Stomach (tissue), 19 donors: ENCODE measurements at regions of chr18 and their contacts with region 1.

Region 1: DNA sequence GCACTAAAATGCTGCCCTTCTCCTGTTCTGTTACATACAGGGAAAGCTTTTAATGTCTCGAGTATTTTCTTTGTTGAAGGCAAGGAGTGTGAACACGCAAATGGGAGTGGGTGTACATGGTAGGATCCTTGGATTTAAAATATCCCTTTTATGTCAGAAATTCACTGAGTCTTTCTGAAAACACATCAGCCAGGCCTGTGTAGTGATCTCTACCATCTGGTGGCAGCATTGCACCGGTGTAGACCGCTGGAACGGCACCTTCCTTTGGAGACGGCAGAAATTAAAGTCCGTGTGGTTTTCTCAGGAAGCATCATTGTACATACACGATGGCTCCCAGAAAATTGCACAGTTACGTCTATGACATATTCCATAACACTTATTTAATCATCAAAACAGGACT is 515.8 kb downstream of the GALR1 start:
- DNase-seq: peak in 1 of 2 donors; percentile 71
- H3K4me3 ChIP-seq: no peak overlapping the region
- H3K27ac ChIP-seq: no peak overlapping the region
- H3K4me1 ChIP-seq: no peaks in the 10 kb centered on the region
- H3K27me3 ChIP-seq: peaks cover 0 to 22% (median 0%) of the 10 kb centered on the region in 3 donors
- CTCF ChIP-seq: no peak
- EP300 ChIP-seq: no peak
- POLR2A ChIP-seq: no peak

Region 2: DNA sequence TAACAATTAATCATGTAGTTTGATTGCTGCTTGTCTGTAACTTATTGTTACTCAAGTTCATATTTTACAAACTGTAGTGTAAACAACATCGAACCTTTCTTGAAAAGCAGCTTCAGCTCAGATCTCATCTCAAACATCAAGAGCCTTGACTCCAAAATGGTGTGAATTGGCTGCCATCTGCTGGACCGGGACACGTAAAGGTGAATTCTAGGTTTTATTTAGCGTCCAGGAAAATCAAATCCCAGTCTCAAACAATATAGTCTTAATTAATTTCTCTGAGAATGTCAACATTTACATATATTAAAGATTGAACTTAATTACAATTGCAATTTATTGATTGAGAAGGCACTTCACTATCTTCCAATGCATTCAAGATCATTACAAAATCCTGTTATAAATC is 62.8 kb before region 1 on chr18:
- intact Hi-C with region 1: loop called (anchors 2 kb)
- DNase-seq: peak in 1 of 2 donors; percentile 69
- H3K4me3 ChIP-seq: no peak overlapping the region
- H3K27ac ChIP-seq: no peak overlapping the region
- H3K4me1 ChIP-seq: no peaks in the 10 kb centered on the region
- H3K27me3 ChIP-seq: peaks cover 0 to 31% (median 0%) of the 10 kb centered on the region in 3 donors
- CTCF ChIP-seq: peak in 1 of 7 experiments; percentile 8
- EP300 ChIP-seq: no peak
- POLR2A ChIP-seq: no peak